ENCODE measurements at regions of chrX and their contacts with region 1.

Region 1: GRCh38 chrX:22135994-22136684 is 104.0 kb downstream of the PHEX start:
- DNase-seq: no peak
- H3K4me3 ChIP-seq: no peak overlapping the region
- H3K27ac ChIP-seq: no peak overlapping the region
- H3K4me1 ChIP-seq: no peaks in the 10 kb centered on the region
- H3K27me3 ChIP-seq: no peaks in the 10 kb centered on the region
- CTCF ChIP-seq: peak; percentile 87

Region 2: GRCh38 chrX:22594766-22595165 is 458.6 kb after region 1 on chrX:
- intact Hi-C with region 1: no loop called
- DNase-seq: no peak
- H3K4me3 ChIP-seq: no peak overlapping the region
- H3K27ac ChIP-seq: no peak overlapping the region
- H3K4me1 ChIP-seq: no peaks in the 10 kb centered on the region
- H3K27me3 ChIP-seq: no peaks in the 10 kb centered on the region
- CTCF ChIP-seq: no peak

Region 3: DNA sequence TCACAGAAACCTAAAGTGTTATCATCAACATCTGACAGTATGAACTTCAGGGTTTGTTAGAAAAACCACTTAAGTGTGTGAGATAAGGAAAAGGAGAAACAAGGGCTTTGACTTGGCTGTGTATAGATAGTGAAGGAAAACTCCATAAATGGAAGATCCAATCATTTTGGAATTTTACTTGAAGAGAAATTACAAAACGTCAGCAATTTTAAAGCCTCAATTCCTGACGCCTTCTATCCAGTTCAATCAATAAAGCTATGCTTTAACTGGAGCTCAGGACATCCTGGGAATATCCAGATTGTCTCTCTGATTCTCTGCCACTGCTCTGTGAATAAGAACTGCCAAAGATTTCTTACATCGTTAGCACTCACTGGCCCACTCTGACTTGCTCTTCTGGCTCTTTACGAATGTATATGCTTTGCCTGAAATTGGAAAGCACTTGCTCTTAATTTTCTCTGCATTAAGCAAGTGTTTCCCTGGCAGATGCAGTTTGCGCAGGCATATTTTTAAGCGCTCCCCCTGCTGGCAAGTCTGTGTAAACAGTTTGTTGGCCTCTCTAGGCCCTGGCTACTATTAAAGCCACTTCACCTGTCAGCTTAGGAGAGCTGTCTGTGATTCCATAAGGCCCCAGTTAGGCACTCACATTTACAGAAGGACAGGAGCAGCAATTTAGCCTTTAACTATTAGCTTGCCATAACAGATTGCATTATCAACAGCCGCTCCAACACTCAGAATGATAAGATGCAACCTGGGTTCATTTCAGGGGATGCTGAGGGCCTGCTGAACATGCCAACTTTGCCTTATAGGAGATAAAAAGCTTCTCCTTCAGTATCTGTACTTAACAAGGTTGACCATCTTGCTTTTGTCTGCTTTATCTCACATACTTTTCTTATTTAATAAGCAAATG is 612.2 kb after region 1 on chrX:
- intact Hi-C with region 1: loop called (anchors 10 kb)
- DNase-seq: peak; percentile 36
- H3K4me3 ChIP-seq: no peak overlapping the region
- H3K27ac ChIP-seq: no peak overlapping the region
- H3K4me1 ChIP-seq: no peaks in the 10 kb centered on the region
- H3K27me3 ChIP-seq: no peaks in the 10 kb centered on the region
- CTCF ChIP-seq: peak; percentile 54